Psoas muscle (tissue), 8 donors: ENCODE measurements at regions of chrX and their contacts with region 1.

Region 1: GRCh38 chrX:47233337-47234113 is 716 bp downstream of the USP11 start:
- DNase-seq: peak; percentile 90 to 98
- ATAC-seq: peak; percentile 90 to 95 (median 92)
- H3K4me3 ChIP-seq: peak overlapping the region; percentile 71
- H3K27ac ChIP-seq: peak overlapping the region; percentile 91
- H3K4me1 ChIP-seq: peaks cover 5% of the 10 kb centered on the region
- H3K27me3 ChIP-seq: no peaks in the 10 kb centered on the region
- CTCF ChIP-seq: no peak

Region 2: GRCh38 chrX:47217642-47218279 is 15.8 kb before region 1 on chrX:
- intact Hi-C with region 1: loop called (anchors 2 kb)
- DNase-seq: peak; percentile 98 to 99
- ATAC-seq: peak; percentile 85 to 89 (median 88)
- H3K4me3 ChIP-seq: peak overlapping the region; percentile 98
- H3K27ac ChIP-seq: peak overlapping the region; percentile 95
- H3K4me1 ChIP-seq: peaks cover 18% of the 10 kb centered on the region
- H3K27me3 ChIP-seq: no peaks in the 10 kb centered on the region
- CTCF ChIP-seq: no peak

Region 3: DNA sequence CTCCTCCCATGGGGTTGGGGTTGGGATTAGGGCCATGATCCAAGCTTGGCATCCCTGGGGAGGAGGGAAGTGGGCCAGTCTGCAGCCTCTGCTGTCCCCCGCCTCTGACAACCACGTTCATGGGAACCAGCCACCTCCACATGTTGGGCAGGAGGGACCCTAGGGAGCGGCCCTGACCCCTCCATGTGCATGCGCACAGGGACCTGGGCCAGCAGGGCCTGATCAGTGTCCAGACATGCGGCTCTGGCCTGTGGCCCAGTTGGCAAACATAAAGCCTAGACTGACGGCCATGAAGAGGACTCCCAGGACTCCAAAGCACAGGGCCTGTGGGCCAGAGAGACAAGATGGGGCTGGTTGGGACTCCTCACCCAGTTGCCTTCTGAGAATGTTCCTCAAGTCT is 1225.2 kb after region 1 on chrX:
- intact Hi-C with region 1: no loop called
- DNase-seq: no peak
- ATAC-seq: no peak
- H3K4me3 ChIP-seq: no peak overlapping the region
- H3K27ac ChIP-seq: no peak overlapping the region
- H3K4me1 ChIP-seq: no peaks in the 10 kb centered on the region
- H3K27me3 ChIP-seq: peaks cover 0 to 6% (median 0%) of the 10 kb centered on the region in 3 donors
- CTCF ChIP-seq: no peak